ENCODE measurements at regions of chr1 and their contacts with region 1.

Region 1: GRCh38 chr1:78649628-78650027 is at the start of gene IFI44:
- DNase-seq: peak; percentile 75
- ATAC-seq: peak; percentile 72
- H3K4me3 ChIP-seq: peak within 1 kb of the TSS; percentile 95
- H3K27ac ChIP-seq: peak within 1 kb of the TSS; percentile 82
- H3K4me1 ChIP-seq: no peaks in the 10 kb centered on the region
- H3K27me3 ChIP-seq: no peaks in the 10 kb centered on the region
- CTCF ChIP-seq: no peak
- EP300 ChIP-seq: no peak
- POLR2A ChIP-seq: peak; percentile 81
- RAD21 ChIP-seq: no peak
- polyA plus RNA-seq, gene IFI44: 75.6 to 125 TPM

Region 2: GRCh38 chr1:77759071-77760028 is 890.3 kb before region 1 on chr1 and contains the start of gene USP33:
- CTCF ChIA-PET with region 1: no interaction called
- POLR2A ChIA-PET with region 1: no interaction called
- RAD21 ChIA-PET with region 1: no interaction called
- SMC1A ChIA-PET with region 1: no interaction called
- in situ Hi-C with region 1: loop called (anchors 25 kb)
- intact Hi-C with region 1: no loop called
- DNase-seq: no peak
- ATAC-seq: peak; percentile 93
- H3K4me3 ChIP-seq: peak within 1 kb of the TSS; percentile 76
- H3K27ac ChIP-seq: peak within 1 kb of the TSS; percentile 74
- H3K4me1 ChIP-seq: peaks cover 8% of the 10 kb centered on the region; the same call in 1 of the 2 replicates
- H3K27me3 ChIP-seq: no peaks in the 10 kb centered on the region
- CTCF ChIP-seq: no peak
- EP300 ChIP-seq: no peak
- POLR2A ChIP-seq: peak; percentile 82
- RAD21 ChIP-seq: no peak
- polyA plus RNA-seq, gene USP33: 13.1 to 15.4 TPM

Region 3: DNA sequence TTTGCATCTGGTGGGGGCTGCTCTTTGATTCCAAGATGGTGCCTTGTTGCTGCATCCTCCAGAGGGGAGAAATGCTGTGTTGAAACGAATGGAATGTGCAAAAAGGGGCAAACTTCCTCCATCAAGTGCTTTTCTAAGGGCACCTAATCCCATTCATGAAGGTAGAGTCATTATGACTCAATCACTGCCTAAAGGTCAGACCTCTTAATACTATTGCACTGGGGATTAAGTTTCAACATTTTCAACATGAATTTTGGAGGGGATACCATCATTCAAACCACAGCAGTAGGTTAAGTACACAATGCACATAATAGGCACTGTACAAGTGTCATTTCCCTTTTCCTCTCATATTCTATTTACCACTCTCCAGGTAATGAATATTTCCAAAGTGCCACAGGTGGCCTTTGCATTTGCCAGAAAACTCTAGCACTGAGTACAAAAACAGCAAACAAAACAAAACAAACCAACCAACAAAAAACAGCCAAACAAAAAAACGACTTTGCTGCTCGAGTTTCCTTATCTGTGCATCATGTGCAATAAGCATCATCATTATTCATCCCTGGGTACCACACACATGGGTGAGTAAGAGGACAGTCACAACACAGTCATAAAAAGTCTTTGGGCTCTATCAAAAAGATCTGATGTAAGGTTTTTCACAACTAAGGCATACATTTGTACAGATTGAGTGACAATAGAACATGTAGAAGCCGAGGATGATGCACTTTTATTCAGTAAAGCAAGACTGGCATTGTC is 42.5 kb after region 1 on chr1:
- CTCF ChIA-PET with region 1: no interaction called
- POLR2A ChIA-PET with region 1: no interaction called
- RAD21 ChIA-PET with region 1: no interaction called
- SMC1A ChIA-PET with region 1: no interaction called
- in situ Hi-C with region 1: no loop called
- intact Hi-C with region 1: no loop called
- DNase-seq: no peak
- ATAC-seq: no peak
- H3K4me3 ChIP-seq: no peak overlapping the region
- H3K27ac ChIP-seq: no peak overlapping the region
- H3K4me1 ChIP-seq: no peaks in the 10 kb centered on the region
- H3K27me3 ChIP-seq: no peaks in the 10 kb centered on the region
- CTCF ChIP-seq: no peak
- EP300 ChIP-seq: no peak
- POLR2A ChIP-seq: no peak
- RAD21 ChIP-seq: no peak

Region 4: GRCh38 chr1:78797108-78797781 is 147.6 kb after region 1 on chr1:
- CTCF ChIA-PET with region 1: no interaction called
- POLR2A ChIA-PET with region 1: no interaction called
- RAD21 ChIA-PET with region 1: no interaction called
- SMC1A ChIA-PET with region 1: no interaction called
- in situ Hi-C with region 1: no loop called
- intact Hi-C with region 1: no loop called
- DNase-seq: no peak
- ATAC-seq: no peak; the same call in 1 of the 3 replicates
- H3K4me3 ChIP-seq: no peak overlapping the region
- H3K27ac ChIP-seq: no peak overlapping the region
- H3K4me1 ChIP-seq: no peaks in the 10 kb centered on the region
- H3K27me3 ChIP-seq: no peaks in the 10 kb centered on the region
- CTCF ChIP-seq: no peak
- EP300 ChIP-seq: no peak
- POLR2A ChIP-seq: no peak
- RAD21 ChIP-seq: no peak

Region 5: DNA sequence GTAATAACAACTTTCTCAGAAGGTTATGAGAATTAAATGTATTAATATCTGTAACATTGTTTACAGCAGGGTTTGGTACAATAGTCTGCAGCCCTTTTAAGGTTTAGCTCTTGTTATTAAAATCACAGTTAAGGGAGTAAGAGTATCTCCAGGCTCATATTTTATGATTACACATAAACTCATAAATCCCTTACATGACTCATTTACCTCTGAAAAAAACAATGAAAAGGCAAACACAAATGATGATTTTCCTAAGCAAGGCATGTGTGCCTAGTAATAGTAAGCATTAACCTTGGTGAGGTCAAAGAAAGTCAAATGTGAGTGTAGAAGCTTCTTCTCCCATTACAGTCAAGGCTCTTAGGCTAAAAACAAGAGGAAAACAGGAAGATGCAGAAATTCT is 441.4 kb after region 1 on chr1:
- CTCF ChIA-PET with region 1: no interaction called
- POLR2A ChIA-PET with region 1: no interaction called
- RAD21 ChIA-PET with region 1: no interaction called
- SMC1A ChIA-PET with region 1: no interaction called
- in situ Hi-C with region 1: no loop called
- intact Hi-C with region 1: no loop called
- DNase-seq: no peak
- ATAC-seq: no peak
- H3K4me3 ChIP-seq: no peak overlapping the region
- H3K27ac ChIP-seq: no peak overlapping the region
- H3K4me1 ChIP-seq: no peaks in the 10 kb centered on the region
- H3K27me3 ChIP-seq: no peaks in the 10 kb centered on the region; a peak in 1 of 4 replicates
- CTCF ChIP-seq: no peak
- EP300 ChIP-seq: no peak
- POLR2A ChIP-seq: no peak
- RAD21 ChIP-seq: no peak